Heart left ventricle (tissue), 16 donors: ENCODE measurements at regions of chr4 and their contacts with region 1.

Region 1: GRCh38 chr4:82890901-82891706 is at the start of gene SEC31A:
- DNase-seq: peak; percentile 97 to 99 (median 98)
- ATAC-seq: peak; percentile 98 to 99 (median 98)
- H3K4me3 ChIP-seq: peak within 1 kb of the TSS; percentile 69 to 98 (median 82)
- H3K27ac ChIP-seq: peak within 1 kb of the TSS; percentile 85 to 99 (median 96)
- H3K4me1 ChIP-seq: peaks cover 0 to 39% (median 33%) of the 10 kb centered on the region in 12 donors
- H3K27me3 ChIP-seq: no peaks in the 10 kb centered on the region
- CTCF ChIP-seq: peak in 4 of 12 donors; percentile 7 to 35 (median 26)
- POLR2A ChIP-seq: peak in 1 of 2 donors; percentile 88
- total RNA-seq, gene SEC31A: 81.0 to 168 (median 101) TPM

Region 2: GRCh38 chr4:82918091-82918490 is 27.0 kb after region 1 on chr4:
- intact Hi-C with region 1: no loop called
- DNase-seq: no peak
- ATAC-seq: no peak
- H3K4me3 ChIP-seq: no peak overlapping the region
- H3K27ac ChIP-seq: no peak overlapping the region
- H3K4me1 ChIP-seq: no peaks in the 10 kb centered on the region
- H3K27me3 ChIP-seq: no peaks in the 10 kb centered on the region
- CTCF ChIP-seq: no peak
- POLR2A ChIP-seq: no peak

Region 3: DNA sequence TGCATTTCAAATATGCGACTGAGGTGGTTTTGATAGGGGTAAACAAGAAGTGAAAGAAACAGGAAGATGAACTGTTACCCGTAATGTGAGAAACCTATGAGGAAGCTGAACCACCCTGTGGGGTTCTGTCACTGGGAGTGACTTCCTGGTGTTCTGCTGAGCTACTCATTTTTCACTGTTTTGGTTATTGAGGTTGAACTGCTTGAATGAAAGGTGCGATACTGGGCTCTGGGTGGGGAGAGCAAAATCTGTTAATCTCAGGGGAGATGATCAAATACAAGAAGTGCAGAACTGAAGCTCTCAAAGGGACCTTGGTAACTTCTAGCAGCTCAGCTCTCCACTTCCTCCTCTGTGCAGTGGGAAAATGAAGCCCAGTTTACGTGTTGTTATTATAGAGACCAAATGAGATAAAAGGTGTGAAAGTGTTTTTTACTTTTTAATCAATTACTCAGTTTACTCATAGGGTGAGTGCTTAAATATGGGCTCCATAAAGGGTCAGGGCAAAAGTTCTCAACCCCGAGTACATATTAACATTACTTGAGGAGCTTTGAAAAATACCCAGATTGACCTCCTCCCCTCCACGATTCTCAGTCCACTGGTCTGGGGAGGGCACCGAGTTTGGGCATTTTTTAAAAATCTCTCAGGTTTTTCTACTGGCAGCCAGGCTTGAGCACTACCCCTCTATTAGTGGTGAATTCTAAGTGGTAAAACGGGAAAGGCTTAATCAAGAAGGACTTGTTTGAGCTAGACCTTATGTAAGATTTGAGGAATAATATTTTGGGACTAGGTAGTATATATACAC is 326.8 kb after region 1 on chr4:
- intact Hi-C with region 1: no loop called
- DNase-seq: no peak
- ATAC-seq: peak in 3 of 4 donors; percentile 47 to 78 (median 77)
- H3K4me3 ChIP-seq: no peak overlapping the region
- H3K27ac ChIP-seq: peak overlapping the region in 2 of 12 donors; percentile 17 to 86
- H3K4me1 ChIP-seq: peaks cover 0 to 50% (median 0%) of the 10 kb centered on the region in 12 donors
- H3K27me3 ChIP-seq: no peaks in the 10 kb centered on the region
- CTCF ChIP-seq: no peak
- POLR2A ChIP-seq: no peak

Region 4: GRCh38 chr4:83284193-83285054 is 393.3 kb after region 1 on chr4 and contains the start of gene COQ2:
- intact Hi-C with region 1: loop called in 1 of 10 experiments (anchors 10 kb)
- DNase-seq: peak; percentile 96 to 98 (median 97)
- ATAC-seq: peak; percentile 98 to 99 (median 98)
- H3K4me3 ChIP-seq: peak within 1 kb of the TSS; percentile 45 to 91 (median 72)
- H3K27ac ChIP-seq: peak within 1 kb of the TSS; percentile 91 to 100 (median 96)
- H3K4me1 ChIP-seq: peaks cover 0 to 43% (median 8%) of the 10 kb centered on the region in 12 donors
- H3K27me3 ChIP-seq: no peaks in the 10 kb centered on the region
- CTCF ChIP-seq: peak in 11 of 12 donors; percentile 21 to 63 (median 47)
- POLR2A ChIP-seq: peak in 1 of 2 donors; percentile 81
- total RNA-seq, gene COQ2: 18.0 to 26.3 (median 22.9) TPM